PC-3 (cell line): ENCODE measurements at regions of chr4 and their contacts with region 1.

Region 1: GRCh38 chr4:169619959-169620879 is at the start of gene CLCN3:
- DNase-seq: peak; percentile 98
- ATAC-seq: peak; percentile 92
- H3K4me3 ChIP-seq: peak within 1 kb of the TSS; percentile 92
- H3K27ac ChIP-seq: peak within 1 kb of the TSS; percentile 83
- H3K4me1 ChIP-seq: peaks cover 19% of the 10 kb centered on the region
- H3K27me3 ChIP-seq: no peaks in the 10 kb centered on the region
- CTCF ChIP-seq: no peak
- total RNA-seq, gene CLCN3: 13.2 and 16.9 TPM in 2 replicates

Region 2: DNA sequence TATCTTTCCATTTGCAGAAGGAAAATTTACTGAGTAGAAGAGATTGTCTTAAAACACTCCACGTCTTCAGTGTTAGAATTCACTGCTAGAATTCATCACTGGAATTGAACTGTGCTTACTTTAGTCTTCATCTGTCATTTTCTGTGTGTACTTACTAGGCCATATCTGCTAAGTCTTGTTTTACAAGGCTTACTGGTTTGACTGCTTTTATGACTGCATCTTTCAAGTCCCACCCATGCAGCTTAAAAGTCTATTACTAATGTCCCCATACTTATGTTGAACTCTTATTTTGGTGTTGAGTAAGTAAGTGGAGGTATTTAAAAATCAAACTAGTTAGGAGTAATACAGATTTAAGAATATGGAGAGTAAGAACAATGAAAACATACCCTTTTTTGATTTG is 14.8 kb after region 1 on chr4:
- CTCF ChIA-PET with region 1: no interaction called
- POLR2A ChIA-PET with region 1: no interaction called
- intact Hi-C with region 1: loop called (anchors 1 kb)
- DNase-seq: peak; percentile 87
- ATAC-seq: peak; percentile 80
- H3K4me3 ChIP-seq: no peak overlapping the region
- H3K27ac ChIP-seq: peak overlapping the region; percentile 16; the same call in 1 of the 2 replicates
- H3K4me1 ChIP-seq: peaks cover 9% of the 10 kb centered on the region
- H3K27me3 ChIP-seq: no peaks in the 10 kb centered on the region
- CTCF ChIP-seq: no peak

Region 3: GRCh38 chr4:169640261-169640870 is 20.1 kb after region 1 on chr4:
- CTCF ChIA-PET with region 1: no interaction called
- POLR2A ChIA-PET with region 1: no interaction called
- intact Hi-C with region 1: loop called (anchors 1 kb)
- DNase-seq: peak; percentile 36
- ATAC-seq: peak; percentile 86
- H3K4me3 ChIP-seq: no peak overlapping the region
- H3K27ac ChIP-seq: peak overlapping the region; percentile 23; the same call in 1 of the 2 replicates
- H3K4me1 ChIP-seq: no peaks in the 10 kb centered on the region
- H3K27me3 ChIP-seq: no peaks in the 10 kb centered on the region
- CTCF ChIP-seq: no peak

Region 4: DNA sequence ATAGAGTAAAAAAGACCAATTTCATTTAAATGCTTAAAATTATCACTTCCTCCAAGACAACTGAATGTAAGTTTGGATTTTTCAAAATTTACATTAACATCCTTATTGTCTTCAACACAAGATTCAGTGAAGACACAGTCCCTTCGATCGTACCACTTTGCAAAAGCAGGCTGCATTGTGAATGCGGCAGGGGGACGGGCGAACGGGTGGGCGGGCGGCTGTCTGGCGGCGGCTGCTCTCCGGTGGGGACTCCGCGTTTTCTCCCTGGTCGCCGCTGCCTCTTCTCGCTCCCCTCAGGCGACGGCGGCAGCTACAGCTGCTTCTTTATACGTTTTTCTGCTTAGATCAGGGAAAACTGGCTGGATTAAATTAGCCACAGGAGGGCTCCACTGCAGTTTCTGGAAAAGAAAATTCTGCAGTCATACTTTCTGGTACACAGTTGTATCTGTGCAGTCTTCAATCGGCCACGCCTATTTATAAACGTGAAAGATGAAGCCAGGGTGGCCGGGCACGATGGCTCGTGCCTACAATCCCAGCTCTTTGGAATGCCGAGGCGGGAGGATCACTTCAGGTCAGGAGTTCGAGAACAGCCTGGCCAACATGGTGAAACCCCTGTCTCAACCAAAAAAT is 171.4 kb after region 1 on chr4:
- CTCF ChIA-PET with region 1: no interaction called
- POLR2A ChIA-PET with region 1: no interaction called
- intact Hi-C with region 1: loop called (anchors 10 kb)
- DNase-seq: peak; percentile 71
- ATAC-seq: peak; percentile 81
- H3K4me3 ChIP-seq: peak overlapping the region; percentile 58
- H3K27ac ChIP-seq: no peak overlapping the region
- H3K4me1 ChIP-seq: no peaks in the 10 kb centered on the region
- H3K27me3 ChIP-seq: peaks cover 22% of the 10 kb centered on the region
- CTCF ChIP-seq: peak; percentile 58